ENCODE measurements at regions of chr6 and their contacts with region 1.

Region 1: GRCh38 chr6:35737413-35738211 is 780 bp downstream of the ARMC12 start:
- DNase-seq: peak; percentile 77
- H3K4me3 ChIP-seq: no peak overlapping the region
- H3K27ac ChIP-seq: no peak overlapping the region
- H3K4me1 ChIP-seq: peaks cover 8% of the 10 kb centered on the region
- H3K27me3 ChIP-seq: no peaks in the 10 kb centered on the region
- CTCF ChIP-seq: peak; percentile 60 to 67
- POLR2A ChIP-seq: no peak

Region 2: GRCh38 chr6:35569011-35569461 is 168.6 kb before region 1 on chr6:
- CTCF ChIA-PET with region 1: interaction called, 60 read pairs
- POLR2A ChIA-PET with region 1: no interaction called
- dilution Hi-C with region 1: no loop called
- intact Hi-C with region 1: loop called (anchors 1 kb)
- DNase-seq: no peak
- H3K4me3 ChIP-seq: no peak overlapping the region
- H3K27ac ChIP-seq: no peak overlapping the region
- H3K4me1 ChIP-seq: no peaks in the 10 kb centered on the region
- H3K27me3 ChIP-seq: peaks cover 12% of the 10 kb centered on the region in 2 experiments
- CTCF ChIP-seq: peak; percentile 44 to 68
- POLR2A ChIP-seq: no peak

Region 3: GRCh38 chr6:35955976-35956375 is 218.4 kb after region 1 on chr6:
- CTCF ChIA-PET with region 1: interaction called, 13 read pairs
- POLR2A ChIA-PET with region 1: no interaction called
- dilution Hi-C with region 1: no loop called
- intact Hi-C with region 1: loop called (anchors 1 kb)
- DNase-seq: no peak
- H3K4me3 ChIP-seq: no peak overlapping the region
- H3K27ac ChIP-seq: no peak overlapping the region
- H3K4me1 ChIP-seq: peaks cover 16% of the 10 kb centered on the region
- H3K27me3 ChIP-seq: peaks cover 2 to 6% of the 10 kb centered on the region in 2 experiments
- CTCF ChIP-seq: peak; percentile 17 to 27
- POLR2A ChIP-seq: no peak

Measured in endothelial cell of umbilical vein (primary cell).